RWPE1 (cell line): ENCODE measurements at regions of chr2 and their contacts with region 1.

Region 1: GRCh38 chr2:33395655-33396249 is 80.7 kb upstream of the RASGRP3 start:
- DNase-seq: no peak
- H3K27ac ChIP-seq: no peak overlapping the region
- CTCF ChIP-seq: peak; percentile 62

Region 2: GRCh38 chr2:33354981-33355380 is 40.8 kb before region 1 on chr2:
- CTCF ChIA-PET with region 1: no interaction called
- POLR2A ChIA-PET with region 1: no interaction called
- DNase-seq: no peak
- H3K27ac ChIP-seq: no peak overlapping the region
- CTCF ChIP-seq: no peak

Region 3: DNA sequence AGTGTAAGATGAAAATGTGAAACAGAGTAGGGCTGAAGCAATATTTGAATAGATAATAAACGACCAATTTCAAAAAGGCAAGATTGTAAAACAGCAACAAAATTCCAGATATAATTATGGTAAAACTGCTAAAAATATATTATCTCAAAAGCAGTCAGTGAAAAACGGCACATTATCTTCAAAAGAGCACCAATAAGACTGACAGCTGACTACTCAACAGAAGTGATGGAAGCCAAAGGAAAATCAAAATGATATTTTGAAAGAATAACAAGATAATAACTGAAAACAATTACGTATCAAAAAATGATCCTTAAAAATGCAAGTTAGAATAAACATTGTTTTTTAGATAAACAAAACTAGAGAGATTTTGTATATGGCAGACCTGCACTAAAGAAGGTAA is 1123.9 kb after region 1 on chr2:
- CTCF ChIA-PET with region 1: interaction called, 10 read pairs
- POLR2A ChIA-PET with region 1: no interaction called
- DNase-seq: no peak
- H3K27ac ChIP-seq: no peak overlapping the region
- CTCF ChIP-seq: no peak